Naive thymus-derived CD4-positive, alpha-beta T cell (primary cell): ENCODE measurements at regions of chr2 and their contacts with region 1.

Region 1: GRCh38 chr2:236569573-236569973 is at the start of gene ACKR3:
- DNase-seq: peak; percentile 32 to 89 (median 81)
- ATAC-seq: peak; percentile 97
- H3K4me3 ChIP-seq: peak within 1 kb of the TSS; percentile 62
- H3K4me3 Mint-ChIP-seq: peak within 1 kb of the TSS; percentile 52 to 95 (median 88)
- H3K27ac ChIP-seq: peak within 1 kb of the TSS; percentile 37
- H3K27ac Mint-ChIP-seq: peak within 1 kb of the TSS in 7 of 9 donors; percentile 19 to 86 (median 72)
- H3K4me1 ChIP-seq: peaks cover 9 to 13% of the 10 kb centered on the region in 2 donors
- H3K4me1 Mint-ChIP-seq: peaks cover 20 to 39% (median 25%) of the 10 kb centered on the region in 7 donors
- H3K27me3 ChIP-seq: no peaks in the 10 kb centered on the region
- H3K27me3 Mint-ChIP-seq: peaks cover 0 to 21% (median 0%) of the 10 kb centered on the region in 5 donors
- total RNA-seq, gene ACKR3: 2.8 to 6.2 (median 4.9) TPM

Region 2: DNA sequence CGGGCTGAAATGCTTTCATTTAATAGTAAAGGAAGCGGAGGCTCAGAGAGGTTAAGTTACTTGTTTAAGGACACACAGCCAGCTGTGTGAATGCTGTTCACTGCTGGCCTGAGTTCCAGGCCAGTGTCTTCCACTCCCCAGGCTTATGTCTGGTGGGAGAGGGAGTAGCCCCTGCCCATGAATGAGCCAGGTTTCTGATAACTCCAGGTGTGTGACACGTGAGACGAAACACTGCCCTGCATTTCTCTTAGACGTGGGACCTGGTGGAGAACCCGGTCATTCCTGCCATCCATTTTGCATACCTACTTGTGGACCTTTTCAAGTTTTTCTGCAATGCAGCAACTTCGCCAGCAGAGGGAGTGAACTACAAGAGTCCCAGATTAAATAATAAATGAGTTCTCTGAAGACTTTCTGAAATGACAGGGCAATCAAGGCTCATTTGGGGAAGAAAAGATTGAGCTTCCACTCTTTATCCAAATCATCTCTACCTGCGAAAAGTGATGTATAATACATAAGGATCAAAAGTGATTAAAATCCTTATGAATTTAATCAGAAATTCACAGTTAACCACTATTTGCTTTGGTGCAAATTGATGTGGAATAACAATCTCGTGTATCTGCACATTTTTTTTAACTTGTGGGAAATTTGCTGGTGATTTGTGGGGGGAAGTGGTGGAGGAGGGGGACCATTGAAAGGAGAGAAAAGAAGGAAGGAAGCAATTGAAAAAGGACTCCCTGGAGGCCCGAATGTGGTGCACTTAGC is 226.0 kb before region 1 on chr2:
- CTCF ChIA-PET with region 1: interaction called, 10 read pairs
- POLR2A ChIA-PET with region 1: no interaction called
- intact Hi-C with region 1: loop called in 1 of 2 experiments (anchors 2 kb)
- DNase-seq: peak in 7 of 9 donors; percentile 26 to 60 (median 50)
- ATAC-seq: peak; percentile 50
- H3K4me3 ChIP-seq: no peak overlapping the region
- H3K4me3 Mint-ChIP-seq: no peak overlapping the region
- H3K27ac ChIP-seq: no peak overlapping the region
- H3K27ac Mint-ChIP-seq: no peak overlapping the region
- H3K4me1 ChIP-seq: no peaks in the 10 kb centered on the region
- H3K4me1 Mint-ChIP-seq: no peaks in the 10 kb centered on the region
- H3K27me3 ChIP-seq: no peaks in the 10 kb centered on the region
- H3K27me3 Mint-ChIP-seq: peaks cover 0 to 6% (median 5%) of the 10 kb centered on the region in 5 donors

Region 3: DNA sequence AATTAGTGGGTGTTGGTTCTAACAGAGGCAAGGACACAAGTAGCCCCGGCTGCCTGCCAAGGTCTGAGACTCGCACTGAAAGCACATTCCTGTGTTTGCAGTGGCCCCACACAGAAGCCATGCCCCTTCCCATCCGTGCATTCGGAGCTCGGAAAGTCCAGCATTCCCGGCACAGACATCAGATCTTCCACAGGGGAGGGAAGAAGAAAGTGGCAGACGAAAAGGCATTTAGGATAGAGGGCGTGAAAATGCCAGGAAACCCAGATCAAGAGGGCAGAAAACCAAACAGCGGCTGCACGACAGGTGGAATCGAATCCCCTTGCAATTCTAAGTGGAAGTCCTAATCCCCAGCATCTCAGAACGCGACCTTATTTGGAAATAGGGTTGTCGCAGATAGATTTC is 199.9 kb before region 1 on chr2:
- CTCF ChIA-PET with region 1: interaction called, 5 read pairs
- POLR2A ChIA-PET with region 1: no interaction called
- intact Hi-C with region 1: loop called in 1 of 2 experiments (anchors 5 kb)
- DNase-seq: no peak
- ATAC-seq: no peak
- H3K4me3 ChIP-seq: no peak overlapping the region
- H3K4me3 Mint-ChIP-seq: no peak overlapping the region
- H3K27ac ChIP-seq: no peak overlapping the region
- H3K27ac Mint-ChIP-seq: no peak overlapping the region
- H3K4me1 ChIP-seq: peaks cover 25 to 31% of the 10 kb centered on the region in 2 donors
- H3K4me1 Mint-ChIP-seq: peaks cover 23 to 50% (median 38%) of the 10 kb centered on the region in 7 donors
- H3K27me3 ChIP-seq: peaks cover 0 to 3% of the 10 kb centered on the region in 2 donors
- H3K27me3 Mint-ChIP-seq: peaks cover 30 to 65% (median 48%) of the 10 kb centered on the region in 5 donors

Region 4: DNA sequence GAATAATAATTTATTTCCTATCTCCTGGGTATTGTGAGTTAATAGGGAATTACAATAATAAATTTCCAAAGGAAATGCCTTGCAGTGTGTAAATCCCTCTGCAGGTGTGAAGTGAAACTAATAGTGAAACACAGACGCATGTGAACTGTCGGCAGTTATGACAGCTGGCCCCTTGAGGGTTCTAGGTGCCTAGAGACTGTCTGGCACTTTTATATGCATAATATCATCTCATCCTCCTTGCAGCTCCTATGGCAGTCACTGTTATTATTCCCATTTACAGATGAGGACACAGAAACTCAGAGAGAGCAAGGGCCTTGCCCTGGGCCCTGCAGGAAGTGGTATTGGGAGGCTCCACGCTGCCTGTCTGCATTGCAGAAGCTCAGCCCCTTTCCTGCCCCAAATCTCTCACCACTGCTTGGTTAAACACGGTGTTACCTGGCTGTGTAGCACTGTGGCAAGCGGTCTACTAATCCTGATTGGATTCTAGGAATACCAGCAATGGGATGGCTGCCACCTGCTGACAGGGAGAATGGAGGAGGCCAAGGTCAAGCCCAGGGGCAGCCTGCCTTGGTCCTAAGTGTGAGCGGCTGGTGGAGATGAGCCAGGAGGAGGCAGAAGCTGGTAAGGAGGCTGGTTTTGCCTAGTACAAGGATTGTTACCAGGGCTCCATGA is 32.7 kb before region 1 on chr2:
- CTCF ChIA-PET with region 1: interaction called, 14 read pairs
- POLR2A ChIA-PET with region 1: interaction called, 12 read pairs
- intact Hi-C with region 1: loop called (anchors 1 kb)
- DNase-seq: peak; percentile 30 to 73 (median 65)
- ATAC-seq: peak; percentile 92
- H3K4me3 ChIP-seq: peak overlapping the region; percentile 79
- H3K4me3 Mint-ChIP-seq: peak overlapping the region; percentile 92 to 100 (median 98)
- H3K27ac ChIP-seq: peak overlapping the region; percentile 81
- H3K27ac Mint-ChIP-seq: peak overlapping the region; percentile 90 to 99 (median 97)
- H3K4me1 ChIP-seq: peaks cover 20 to 27% of the 10 kb centered on the region in 2 donors
- H3K4me1 Mint-ChIP-seq: peaks cover 43 to 59% (median 55%) of the 10 kb centered on the region in 7 donors
- H3K27me3 ChIP-seq: no peaks in the 10 kb centered on the region
- H3K27me3 Mint-ChIP-seq: peaks cover 0 to 5% (median 0%) of the 10 kb centered on the region in 5 donors

Region 5: DNA sequence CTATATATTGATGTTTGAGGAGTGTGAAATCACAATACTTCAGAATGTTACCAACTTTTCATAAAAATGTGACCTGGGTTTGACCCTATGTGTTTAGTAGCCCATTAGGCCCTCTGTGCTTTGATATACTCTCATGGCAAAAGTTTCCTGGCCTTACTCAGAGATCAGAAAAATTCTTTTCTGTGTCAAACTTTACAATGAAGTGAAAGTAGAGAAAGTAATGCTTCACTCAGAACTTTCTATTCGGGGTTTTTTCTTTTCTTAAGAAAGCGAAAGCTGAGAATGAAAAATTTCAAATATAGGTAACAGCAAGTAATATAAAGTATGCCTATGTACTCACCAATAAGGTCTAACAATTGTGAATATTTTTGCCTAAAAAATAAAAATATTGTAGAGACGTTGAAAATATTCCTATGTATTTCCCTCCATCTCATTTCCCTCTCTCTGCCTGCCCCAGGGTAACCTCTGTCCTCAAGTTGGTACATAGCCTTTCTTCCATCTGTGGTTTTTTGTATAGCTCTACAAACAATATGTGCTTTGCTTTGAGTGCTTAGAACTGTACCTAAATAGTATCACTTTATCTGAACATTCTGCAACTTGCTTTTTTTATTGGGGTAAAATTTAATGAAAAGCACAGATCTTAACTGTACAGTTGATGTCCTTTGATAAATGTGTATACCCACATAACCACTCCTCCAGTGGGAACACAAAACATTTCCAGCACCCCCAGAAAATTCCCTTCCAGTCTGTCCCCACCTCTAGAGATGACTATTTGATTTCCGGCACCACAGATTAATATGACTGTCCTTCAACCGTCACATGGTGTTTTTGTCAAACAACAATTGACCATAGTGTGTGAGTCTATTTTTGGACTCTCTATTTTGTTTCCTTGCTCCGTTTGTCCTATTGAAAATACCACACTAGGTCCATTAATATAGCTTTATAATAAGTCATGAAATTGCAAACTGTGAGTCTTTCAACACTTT is 10.3 kb before region 1 on chr2:
- CTCF ChIA-PET with region 1: interaction called, 27 read pairs
- POLR2A ChIA-PET with region 1: interaction called, 7 read pairs
- intact Hi-C with region 1: loop called in 1 of 2 experiments (anchors 1 kb)
- DNase-seq: no peak
- ATAC-seq: no peak
- H3K4me3 ChIP-seq: no peak overlapping the region
- H3K4me3 Mint-ChIP-seq: peak overlapping the region in 4 of 10 donors; percentile 17 to 45 (median 28)
- H3K27ac ChIP-seq: no peak overlapping the region
- H3K27ac Mint-ChIP-seq: peak overlapping the region in 7 of 9 donors; percentile 14 to 71 (median 53)
- H3K4me1 ChIP-seq: peaks cover 9 to 17% of the 10 kb centered on the region in 2 donors
- H3K4me1 Mint-ChIP-seq: peaks cover 35 to 70% (median 48%) of the 10 kb centered on the region in 7 donors
- H3K27me3 ChIP-seq: no peaks in the 10 kb centered on the region
- H3K27me3 Mint-ChIP-seq: no peaks in the 10 kb centered on the region

Region 6: GRCh38 chr2:237060534-237061312 is 491.1 kb after region 1 on chr2:
- CTCF ChIA-PET with region 1: no interaction called
- POLR2A ChIA-PET with region 1: no interaction called
- intact Hi-C with region 1: loop called in 1 of 2 experiments (anchors 1 kb)
- DNase-seq: peak in 6 of 9 donors; percentile 15 to 34 (median 31)
- ATAC-seq: no peak
- H3K4me3 ChIP-seq: no peak overlapping the region
- H3K4me3 Mint-ChIP-seq: no peak overlapping the region
- H3K27ac ChIP-seq: no peak overlapping the region
- H3K27ac Mint-ChIP-seq: peak overlapping the region in 3 of 9 donors; percentile 22 to 70 (median 46)
- H3K4me1 ChIP-seq: no peaks in the 10 kb centered on the region
- H3K4me1 Mint-ChIP-seq: peaks cover 0 to 11% (median 0%) of the 10 kb centered on the region in 7 donors
- H3K27me3 ChIP-seq: no peaks in the 10 kb centered on the region
- H3K27me3 Mint-ChIP-seq: peaks cover 0 to 6% (median 0%) of the 10 kb centered on the region in 5 donors

Region 7: GRCh38 chr2:237085248-237086221 is 516.0 kb after region 1 on chr2 and contains the start of gene COPS8:
- CTCF ChIA-PET with region 1: no interaction called
- POLR2A ChIA-PET with region 1: no interaction called
- intact Hi-C with region 1: loop called in 1 of 2 experiments (anchors 5 kb)
- DNase-seq: peak; percentile 82 to 93 (median 89)
- ATAC-seq: peak; percentile 99
- H3K4me3 ChIP-seq: peak within 1 kb of the TSS; percentile 95
- H3K4me3 Mint-ChIP-seq: peak within 1 kb of the TSS; percentile 95 to 100 (median 99)
- H3K27ac ChIP-seq: peak within 1 kb of the TSS; percentile 83
- H3K27ac Mint-ChIP-seq: peak within 1 kb of the TSS; percentile 94 to 99 (median 99)
- H3K4me1 ChIP-seq: peaks cover 8 to 15% of the 10 kb centered on the region in 2 donors
- H3K4me1 Mint-ChIP-seq: peaks cover 23 to 52% (median 28%) of the 10 kb centered on the region in 7 donors
- H3K27me3 ChIP-seq: no peaks in the 10 kb centered on the region
- H3K27me3 Mint-ChIP-seq: no peaks in the 10 kb centered on the region
- total RNA-seq, gene COPS8: 31.2 to 46.4 (median 40.8) TPM